Caco-2 (cell line): ENCODE measurements at regions of chr13 and their contacts with region 1.

Region 1: GRCh38 chr13:98267080-98267912 is 90.2 kb upstream of the RNF113B start:
- DNase-seq: peak; percentile 75 to 81
- H3K4me3 ChIP-seq: no peak overlapping the region
- H3K4me3 Mint-ChIP-seq: peak overlapping the region; percentile 70
- H3K27ac Mint-ChIP-seq: peak overlapping the region; percentile 87
- H3K4me1 ChIP-seq: peaks cover 79% of the 10 kb centered on the region
- H3K4me1 Mint-ChIP-seq: peaks cover 75% of the 10 kb centered on the region
- H3K27me3 ChIP-seq: no peaks in the 10 kb centered on the region
- H3K27me3 Mint-ChIP-seq: no peaks in the 10 kb centered on the region
- CTCF ChIP-seq: no peak

Region 2: DNA sequence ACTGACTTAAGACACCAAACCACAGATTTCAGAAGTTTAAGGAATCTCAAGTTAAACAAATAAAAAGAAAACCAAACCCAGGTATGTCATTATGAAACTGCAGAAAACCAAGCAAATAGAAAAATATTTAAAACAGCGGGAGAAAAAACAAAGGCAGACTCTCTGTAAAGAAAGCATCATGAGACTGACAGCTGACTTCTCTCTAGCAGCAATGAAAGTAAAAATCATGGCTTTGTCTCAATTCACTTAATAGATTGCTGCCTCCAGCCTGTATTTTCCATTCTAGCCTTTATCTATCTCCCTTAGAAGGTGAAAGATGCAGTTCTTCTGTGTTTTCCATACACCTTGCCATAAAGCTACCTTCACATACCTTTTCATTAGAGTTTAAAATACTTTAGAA is 444.9 kb before region 1 on chr13:
- CTCF ChIA-PET with region 1: no interaction called
- POLR2A ChIA-PET with region 1: no interaction called
- intact Hi-C with region 1: no loop called
- DNase-seq: no peak
- H3K4me3 ChIP-seq: no peak overlapping the region
- H3K4me3 Mint-ChIP-seq: no peak overlapping the region
- H3K27ac Mint-ChIP-seq: no peak overlapping the region
- H3K4me1 ChIP-seq: peaks cover 12% of the 10 kb centered on the region
- H3K4me1 Mint-ChIP-seq: no peaks in the 10 kb centered on the region
- H3K27me3 ChIP-seq: no peaks in the 10 kb centered on the region
- H3K27me3 Mint-ChIP-seq: peaks cover 13% of the 10 kb centered on the region
- CTCF ChIP-seq: no peak

Region 3: GRCh38 chr13:98173431-98174152 is 93.7 kb before region 1 on chr13:
- CTCF ChIA-PET with region 1: no interaction called
- POLR2A ChIA-PET with region 1: no interaction called
- intact Hi-C with region 1: loop called (anchors 10 kb)
- DNase-seq: peak in 1 of 2 experiments; percentile 38
- H3K4me3 ChIP-seq: no peak overlapping the region
- H3K4me3 Mint-ChIP-seq: peak overlapping the region; percentile 20
- H3K27ac Mint-ChIP-seq: peak overlapping the region; percentile 82
- H3K4me1 ChIP-seq: peaks cover 54% of the 10 kb centered on the region
- H3K4me1 Mint-ChIP-seq: peaks cover 30% of the 10 kb centered on the region
- H3K27me3 ChIP-seq: no peaks in the 10 kb centered on the region
- H3K27me3 Mint-ChIP-seq: no peaks in the 10 kb centered on the region
- CTCF ChIP-seq: no peak

Region 4: GRCh38 chr13:98252931-98253470 is 14.3 kb before region 1 on chr13:
- CTCF ChIA-PET with region 1: no interaction called
- POLR2A ChIA-PET with region 1: no interaction called
- intact Hi-C with region 1: loop called (anchors 2 kb)
- DNase-seq: peak; percentile 53 to 63
- H3K4me3 ChIP-seq: no peak overlapping the region
- H3K4me3 Mint-ChIP-seq: no peak overlapping the region
- H3K27ac Mint-ChIP-seq: peak overlapping the region; percentile 89
- H3K4me1 ChIP-seq: peaks cover 37% of the 10 kb centered on the region
- H3K4me1 Mint-ChIP-seq: peaks cover 49% of the 10 kb centered on the region
- H3K27me3 ChIP-seq: no peaks in the 10 kb centered on the region
- H3K27me3 Mint-ChIP-seq: no peaks in the 10 kb centered on the region
- CTCF ChIP-seq: no peak